CD4-positive, alpha-beta T cell (primary cell): ENCODE measurements at regions of chr2 and their contacts with region 1.

Region 1: GRCh38 chr2:46010925-46011490 is 286.2 kb upstream of the EPAS1 start:
- DNase-seq: peak in 3 of 14 experiments; percentile 36 to 45 (median 36)
- ATAC-seq: no peak
- H3K4me3 ChIP-seq: no peak overlapping the region
- H3K4me3 Mint-ChIP-seq: no peak overlapping the region
- H3K27ac ChIP-seq: no peak overlapping the region
- H3K27ac Mint-ChIP-seq: no peak overlapping the region
- H3K4me1 ChIP-seq: no peaks in the 10 kb centered on the region
- H3K4me1 Mint-ChIP-seq: peaks cover 4% of the 10 kb centered on the region
- H3K27me3 ChIP-seq: no peaks in the 10 kb centered on the region
- H3K27me3 Mint-ChIP-seq: no peaks in the 10 kb centered on the region
- CTCF ChIP-seq: peak; percentile 57

Region 2: GRCh38 chr2:45974056-45974455 is 37.0 kb before region 1 on chr2:
- CTCF ChIA-PET with region 1: no interaction called
- POLR2A ChIA-PET with region 1: no interaction called
- intact Hi-C with region 1: no loop called
- DNase-seq: no peak
- ATAC-seq: no peak
- H3K4me3 ChIP-seq: no peak overlapping the region
- H3K4me3 Mint-ChIP-seq: no peak overlapping the region
- H3K27ac ChIP-seq: no peak overlapping the region
- H3K27ac Mint-ChIP-seq: no peak overlapping the region
- H3K4me1 ChIP-seq: no peaks in the 10 kb centered on the region
- H3K4me1 Mint-ChIP-seq: no peaks in the 10 kb centered on the region
- H3K27me3 ChIP-seq: no peaks in the 10 kb centered on the region
- H3K27me3 Mint-ChIP-seq: no peaks in the 10 kb centered on the region
- CTCF ChIP-seq: no peak

Region 3: DNA sequence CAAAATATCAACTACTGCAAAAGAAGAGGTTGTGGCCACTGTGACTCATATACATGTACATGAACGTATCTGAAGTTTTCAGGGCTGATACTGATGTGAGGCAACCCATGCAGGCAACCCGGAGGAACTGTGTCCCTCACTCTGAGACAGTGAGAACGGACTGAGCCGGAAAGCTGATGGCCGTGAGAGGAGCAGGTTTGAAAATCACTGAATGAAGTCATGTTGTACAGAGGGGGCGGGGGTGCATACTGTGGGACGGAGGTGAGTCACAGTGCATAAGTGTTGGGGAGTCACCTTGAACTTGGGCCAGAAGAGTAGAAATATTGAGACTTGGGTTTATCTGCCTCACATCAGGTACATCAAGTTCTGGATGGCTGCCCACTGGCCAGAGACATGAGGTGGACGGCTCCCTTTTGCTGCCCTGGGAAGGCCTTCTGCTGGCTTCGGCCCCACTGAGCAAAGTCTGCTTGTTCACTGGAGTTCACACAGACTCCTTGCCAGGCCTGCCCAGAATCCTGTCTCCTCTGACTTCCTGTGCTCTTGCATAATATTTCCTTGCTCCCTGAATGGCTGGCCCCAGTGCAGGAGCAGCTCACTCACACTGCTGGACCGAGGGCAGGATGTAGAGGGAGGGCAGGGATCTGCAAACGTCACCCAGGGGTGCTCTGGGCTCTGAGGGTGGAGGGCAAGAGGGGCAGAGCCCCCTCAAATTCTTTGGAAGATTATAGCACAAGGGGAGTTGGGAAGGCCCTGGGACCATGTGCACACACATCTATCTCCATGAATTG is 304.3 kb after region 1 on chr2:
- CTCF ChIA-PET with region 1: no interaction called
- POLR2A ChIA-PET with region 1: no interaction called
- intact Hi-C with region 1: no loop called
- DNase-seq: peak in 2 of 14 experiments; percentile 11 to 25
- ATAC-seq: no peak
- H3K4me3 ChIP-seq: no peak overlapping the region
- H3K4me3 Mint-ChIP-seq: no peak overlapping the region
- H3K27ac ChIP-seq: no peak overlapping the region
- H3K27ac Mint-ChIP-seq: no peak overlapping the region
- H3K4me1 ChIP-seq: peaks cover 5% of the 10 kb centered on the region
- H3K4me1 Mint-ChIP-seq: peaks cover 5% of the 10 kb centered on the region
- H3K27me3 ChIP-seq: no peaks in the 10 kb centered on the region
- H3K27me3 Mint-ChIP-seq: peaks cover 2% of the 10 kb centered on the region
- CTCF ChIP-seq: no peak

Region 4: GRCh38 chr2:46873375-46874032 is 862.5 kb after region 1 on chr2:
- CTCF ChIA-PET with region 1: no interaction called
- POLR2A ChIA-PET with region 1: no interaction called
- intact Hi-C with region 1: loop called in 1 of 2 experiments (anchors 2 kb)
- DNase-seq: peak in 3 of 14 experiments; percentile 11 to 63 (median 43)
- ATAC-seq: no peak
- H3K4me3 ChIP-seq: no peak overlapping the region
- H3K4me3 Mint-ChIP-seq: no peak overlapping the region
- H3K27ac ChIP-seq: no peak overlapping the region
- H3K27ac Mint-ChIP-seq: no peak overlapping the region
- H3K4me1 ChIP-seq: no peaks in the 10 kb centered on the region
- H3K4me1 Mint-ChIP-seq: no peaks in the 10 kb centered on the region
- H3K27me3 ChIP-seq: no peaks in the 10 kb centered on the region
- H3K27me3 Mint-ChIP-seq: no peaks in the 10 kb centered on the region
- CTCF ChIP-seq: no peak